ENCODE measurements at regions of chr4 and their contacts with region 1.

Region 1: DNA sequence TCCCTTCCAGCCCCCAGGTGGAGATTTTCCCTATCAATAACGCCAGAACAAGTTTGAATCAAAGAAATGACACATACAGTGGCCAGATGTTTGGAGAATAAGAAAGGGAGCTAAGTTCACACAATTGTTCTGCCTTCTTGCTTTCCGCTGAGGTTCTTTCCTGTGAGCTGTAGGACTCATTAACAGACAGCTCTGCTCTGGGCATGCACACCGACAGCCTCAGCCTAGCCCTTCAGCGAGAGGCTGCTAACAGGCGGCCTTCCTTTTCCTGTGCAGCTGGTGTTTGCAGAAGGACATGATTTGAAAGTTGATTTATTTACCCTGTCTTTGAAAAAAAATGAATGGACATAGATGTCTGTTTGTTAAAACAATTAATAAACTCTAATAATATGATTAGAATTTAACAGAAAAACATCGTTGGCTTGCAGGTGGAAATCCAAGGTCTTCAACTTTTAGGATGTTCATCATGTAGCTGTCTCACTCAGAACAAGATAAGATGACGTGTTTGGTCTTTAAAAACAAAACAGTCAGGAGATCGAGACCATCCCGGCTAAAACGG is 183.3 kb downstream of the KDR start:
- DNase-seq: no peak
- ATAC-seq: no peak

Region 2: GRCh38 chr4:54661686-54662085 is 280.4 kb before region 1 on chr4:
- intact Hi-C with region 1: loop called (anchors 10 kb)
- DNase-seq: no peak
- ATAC-seq: no peak

Region 3: GRCh38 chr4:54784161-54784671 is 157.9 kb before region 1 on chr4:
- intact Hi-C with region 1: loop called (anchors 10 kb)
- DNase-seq: peak; percentile 88
- ATAC-seq: peak; percentile 94

Region 4: DNA sequence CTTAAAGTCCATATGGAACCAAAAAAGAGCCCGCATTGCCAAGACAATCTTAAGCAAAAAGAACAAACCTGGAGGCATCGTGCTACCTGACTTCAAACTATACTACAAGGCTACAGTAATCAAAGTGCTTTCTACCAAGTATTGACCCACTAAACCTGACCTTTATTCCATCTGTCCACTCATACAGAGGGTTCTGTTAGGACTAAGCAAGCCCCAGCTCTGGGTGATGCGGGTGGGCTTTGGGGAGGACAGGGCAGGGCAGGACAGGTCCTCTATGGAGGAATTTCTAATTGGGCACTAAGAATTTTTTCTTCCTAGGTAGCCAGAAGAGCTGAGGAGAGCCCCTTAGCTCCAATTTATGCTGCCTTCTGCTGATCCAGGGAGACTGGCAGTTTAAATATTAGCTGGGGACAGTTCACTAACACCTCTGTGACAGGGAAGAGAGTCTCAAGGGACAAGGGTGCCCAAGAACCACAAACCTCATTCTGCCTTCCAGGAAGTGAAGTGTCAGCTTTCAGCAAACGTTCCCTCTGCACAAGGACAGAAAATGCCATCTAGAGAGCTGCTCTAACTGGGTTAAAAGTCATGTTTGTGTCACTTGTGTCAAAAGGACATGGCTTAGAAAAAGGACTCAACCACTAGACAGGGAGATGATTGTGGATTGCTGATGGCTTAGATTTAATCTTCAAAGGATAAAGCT is 141.1 kb before region 1 on chr4:
- intact Hi-C with region 1: no loop called
- DNase-seq: no peak
- ATAC-seq: peak; percentile 80

Measured in Right ventricle myocardium inferior (tissue), 1 donor.